MCF 10A (cell line): ENCODE measurements at regions of chr20 and their contacts with region 1.

Region 1: DNA sequence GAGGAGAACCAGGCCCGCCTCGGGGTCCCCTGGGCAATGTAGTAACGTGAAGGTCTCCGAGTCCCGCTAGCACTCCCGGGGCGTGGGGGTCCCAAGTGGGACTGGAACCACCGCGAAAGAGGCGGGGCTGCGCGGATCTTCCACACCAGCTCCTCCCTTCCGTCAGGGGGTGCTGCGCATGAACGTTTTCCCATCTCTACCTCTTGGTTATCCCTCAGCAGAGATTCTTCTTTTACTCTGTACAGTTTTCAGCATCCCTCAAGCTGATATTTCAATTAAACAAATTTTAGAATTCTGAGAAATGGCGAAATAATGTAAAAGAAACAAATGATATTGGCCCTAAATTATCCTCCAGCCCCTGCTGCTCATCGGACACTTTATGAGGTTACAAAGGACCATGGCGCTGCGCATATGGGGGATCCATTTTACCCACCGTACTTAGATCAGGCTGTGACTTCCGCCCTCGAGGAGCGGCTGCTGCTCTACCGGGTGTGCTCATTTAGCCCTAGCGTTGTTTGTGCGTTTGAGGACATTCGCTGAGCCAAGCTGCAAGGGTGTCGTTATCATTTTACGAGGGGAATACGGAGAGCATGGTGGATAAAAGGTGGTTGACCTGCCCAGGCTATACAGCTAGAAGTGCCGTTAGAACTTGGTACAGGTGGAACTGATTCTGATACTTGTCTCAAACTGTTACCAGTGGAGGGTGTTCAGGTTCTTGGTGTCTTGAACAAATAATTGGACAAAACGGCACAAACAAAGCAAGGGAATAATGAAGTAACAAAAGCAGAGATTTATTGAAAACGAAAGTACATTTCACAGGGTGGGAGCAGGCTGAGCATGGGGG is 75.2 kb upstream of the CHD6 start:
- DNase-seq: peak; percentile 71
- H3K4me3 Mint-ChIP-seq: peak overlapping the region; percentile 78
- H3K27ac Mint-ChIP-seq: peak overlapping the region; percentile 32
- H3K4me1 Mint-ChIP-seq: peaks cover 17% of the 10 kb centered on the region
- H3K27me3 Mint-ChIP-seq: peaks cover 30% of the 10 kb centered on the region
- CTCF ChIP-seq: peak; percentile 24

Region 2: GRCh38 chr20:41617931-41618806 is 75.2 kb before region 1 on chr20 and contains the start of gene CHD6:
- CTCF ChIA-PET with region 1: interaction called, 10 read pairs
- POLR2A ChIA-PET with region 1: interaction called, 29 read pairs
- intact Hi-C with region 1: no loop called
- DNase-seq: peak; percentile 100
- H3K4me3 Mint-ChIP-seq: peak within 1 kb of the TSS; percentile 87
- H3K27ac Mint-ChIP-seq: peak within 1 kb of the TSS; percentile 77
- H3K4me1 Mint-ChIP-seq: peaks cover 25% of the 10 kb centered on the region
- H3K27me3 Mint-ChIP-seq: no peaks in the 10 kb centered on the region
- CTCF ChIP-seq: no peak
- total RNA-seq, gene CHD6: 27.1 and 27.2 TPM in 2 replicates

Region 3: GRCh38 chr20:41717483-41717882 is 24.1 kb after region 1 on chr20:
- CTCF ChIA-PET with region 1: interaction called, 95 read pairs
- POLR2A ChIA-PET with region 1: interaction called, 3 read pairs
- intact Hi-C with region 1: no loop called
- DNase-seq: peak; percentile 30
- H3K4me3 Mint-ChIP-seq: no peak overlapping the region
- H3K27ac Mint-ChIP-seq: no peak overlapping the region
- H3K4me1 Mint-ChIP-seq: no peaks in the 10 kb centered on the region
- H3K27me3 Mint-ChIP-seq: peaks cover 13% of the 10 kb centered on the region
- CTCF ChIP-seq: no peak

Region 4: DNA sequence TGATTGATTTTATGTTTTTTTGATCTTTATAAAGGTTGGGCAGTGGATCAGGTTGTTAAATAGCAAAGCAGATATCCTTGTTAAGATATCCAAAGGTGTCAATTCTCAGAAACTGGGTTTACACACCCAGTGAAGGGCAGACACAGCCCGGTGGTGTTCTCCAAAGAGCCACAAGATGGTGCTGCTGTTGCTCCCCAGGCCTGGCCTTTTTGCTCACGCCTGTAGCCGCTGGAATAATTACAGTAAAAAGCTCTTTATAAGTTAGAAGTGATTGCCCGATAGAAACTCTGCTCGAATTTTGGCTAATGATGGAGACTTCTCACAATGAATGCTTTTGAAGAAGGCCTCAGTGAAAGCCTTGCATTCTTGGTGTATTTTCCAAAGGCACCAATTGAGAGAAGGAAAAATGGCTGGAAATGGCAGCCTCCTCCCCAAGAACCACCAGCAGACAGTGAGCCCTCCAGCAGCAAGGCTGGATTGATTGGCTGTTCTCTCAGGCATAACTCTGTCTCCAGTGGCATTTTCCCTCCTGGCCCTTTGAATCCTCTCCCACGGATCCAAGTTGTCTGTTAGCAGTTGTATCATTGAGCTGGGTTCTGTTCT is 45.3 kb after region 1 on chr20:
- CTCF ChIA-PET with region 1: interaction called, 38 read pairs
- POLR2A ChIA-PET with region 1: interaction called, 4 read pairs
- intact Hi-C with region 1: no loop called
- DNase-seq: peak; percentile 56
- H3K4me3 Mint-ChIP-seq: no peak overlapping the region
- H3K27ac Mint-ChIP-seq: no peak overlapping the region
- H3K4me1 Mint-ChIP-seq: no peaks in the 10 kb centered on the region
- H3K27me3 Mint-ChIP-seq: peaks cover 4% of the 10 kb centered on the region
- CTCF ChIP-seq: peak; percentile 81

Region 5: DNA sequence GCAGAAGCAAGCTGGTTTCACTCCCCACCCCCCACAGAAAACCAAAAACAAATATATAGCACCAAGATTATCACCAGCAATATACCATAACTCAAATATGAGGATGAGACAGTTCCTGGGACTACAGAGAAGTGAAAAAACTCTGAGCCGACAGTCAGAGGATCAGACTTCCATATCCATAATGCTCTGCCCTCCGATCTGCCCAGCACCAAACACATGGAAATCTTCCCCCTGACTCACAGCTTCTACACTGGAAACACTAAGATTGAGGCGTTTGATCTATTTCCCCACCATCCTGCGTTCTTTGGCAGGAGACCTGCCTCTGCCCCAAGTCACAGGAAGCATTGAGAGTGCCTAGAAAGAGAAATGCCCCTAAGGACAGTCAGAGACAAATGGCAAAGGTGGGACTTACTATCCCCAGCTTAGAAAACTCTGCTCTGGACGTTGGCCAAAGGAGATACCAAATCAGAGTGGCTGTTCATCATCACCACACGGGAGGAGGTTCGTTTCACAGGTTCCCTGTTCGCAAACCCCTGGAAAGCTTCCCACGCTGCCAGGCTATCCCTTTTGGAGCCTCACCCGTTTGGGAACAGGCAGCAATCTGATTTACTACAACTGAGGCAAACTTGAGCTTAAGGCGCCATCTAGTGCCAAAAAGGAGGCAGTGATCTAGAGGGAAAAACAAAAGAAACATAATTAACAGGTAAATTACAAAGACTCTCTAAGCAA is 1715.7 kb after region 1 on chr20:
- CTCF ChIA-PET with region 1: interaction called, 16 read pairs
- POLR2A ChIA-PET with region 1: no interaction called
- intact Hi-C with region 1: loop called (anchors 5 kb)
- DNase-seq: peak; percentile 53
- H3K4me3 Mint-ChIP-seq: no peak overlapping the region
- H3K27ac Mint-ChIP-seq: no peak overlapping the region
- H3K4me1 Mint-ChIP-seq: peaks cover 7% of the 10 kb centered on the region
- H3K27me3 Mint-ChIP-seq: peaks cover 38% of the 10 kb centered on the region
- CTCF ChIP-seq: peak; percentile 65